Mammary epithelial cell (primary cell): ENCODE measurements at regions of chr11 and their contacts with region 1.

Region 1: GRCh38 chr11:84558085-84558905 is 1068.8 kb downstream of the DLG2 start:
- DNase-seq: peak; percentile 27
- H3K4me3 ChIP-seq: no peak overlapping the region
- H3K27ac ChIP-seq: no peak overlapping the region
- H3K4me1 ChIP-seq: no peaks in the 10 kb centered on the region
- H3K27me3 ChIP-seq: no peaks in the 10 kb centered on the region
- CTCF ChIP-seq: peak; percentile 80 to 93

Region 2: GRCh38 chr11:83401506-83402225 is 1156.6 kb before region 1 on chr11:
- CTCF ChIA-PET with region 1: interaction called, 10 read pairs
- dilution Hi-C with region 1: no loop called
- in situ Hi-C with region 1: no loop called
- intact Hi-C with region 1: no loop called
- DNase-seq: no peak
- H3K4me3 ChIP-seq: no peak overlapping the region
- H3K27ac ChIP-seq: no peak overlapping the region
- H3K4me1 ChIP-seq: no peaks in the 10 kb centered on the region
- H3K27me3 ChIP-seq: no peaks in the 10 kb centered on the region
- CTCF ChIP-seq: no peak

Region 3: DNA sequence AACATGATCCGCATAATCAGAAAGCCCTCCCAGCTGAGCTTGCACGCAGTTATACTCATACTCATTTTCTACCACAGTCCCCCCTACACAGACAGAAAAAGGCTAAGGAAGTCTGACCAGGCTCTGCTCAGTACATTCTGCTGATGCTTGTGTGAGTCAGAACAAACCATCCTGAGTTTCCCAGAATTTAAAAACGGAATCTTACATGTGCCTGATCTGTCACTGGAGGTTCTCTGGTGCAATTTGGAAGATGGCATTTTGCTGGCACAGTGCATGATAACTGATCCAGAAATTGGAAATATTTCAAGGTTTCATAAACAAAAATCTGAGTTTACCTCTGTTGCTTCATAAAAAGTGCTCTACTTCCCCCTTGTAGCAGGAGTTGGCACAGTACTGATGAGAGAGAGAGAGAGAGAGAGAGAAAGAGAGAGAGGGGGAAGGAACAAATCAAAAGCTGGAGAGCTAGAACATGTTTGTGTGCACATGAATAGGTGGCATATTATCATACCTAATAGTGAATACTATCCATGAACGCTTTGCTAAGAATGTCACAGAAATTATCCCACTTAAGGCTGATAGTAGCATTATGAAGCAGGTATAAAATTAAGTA is 16.5 kb before region 1 on chr11:
- CTCF ChIA-PET with region 1: no interaction called
- dilution Hi-C with region 1: no loop called
- in situ Hi-C with region 1: no loop called
- intact Hi-C with region 1: no loop called
- DNase-seq: no peak
- H3K4me3 ChIP-seq: no peak overlapping the region
- H3K27ac ChIP-seq: no peak overlapping the region
- H3K4me1 ChIP-seq: no peaks in the 10 kb centered on the region
- H3K27me3 ChIP-seq: no peaks in the 10 kb centered on the region
- CTCF ChIP-seq: no peak